ENCODE measurements at regions of chrX and their contacts with region 1.

Region 1: DNA sequence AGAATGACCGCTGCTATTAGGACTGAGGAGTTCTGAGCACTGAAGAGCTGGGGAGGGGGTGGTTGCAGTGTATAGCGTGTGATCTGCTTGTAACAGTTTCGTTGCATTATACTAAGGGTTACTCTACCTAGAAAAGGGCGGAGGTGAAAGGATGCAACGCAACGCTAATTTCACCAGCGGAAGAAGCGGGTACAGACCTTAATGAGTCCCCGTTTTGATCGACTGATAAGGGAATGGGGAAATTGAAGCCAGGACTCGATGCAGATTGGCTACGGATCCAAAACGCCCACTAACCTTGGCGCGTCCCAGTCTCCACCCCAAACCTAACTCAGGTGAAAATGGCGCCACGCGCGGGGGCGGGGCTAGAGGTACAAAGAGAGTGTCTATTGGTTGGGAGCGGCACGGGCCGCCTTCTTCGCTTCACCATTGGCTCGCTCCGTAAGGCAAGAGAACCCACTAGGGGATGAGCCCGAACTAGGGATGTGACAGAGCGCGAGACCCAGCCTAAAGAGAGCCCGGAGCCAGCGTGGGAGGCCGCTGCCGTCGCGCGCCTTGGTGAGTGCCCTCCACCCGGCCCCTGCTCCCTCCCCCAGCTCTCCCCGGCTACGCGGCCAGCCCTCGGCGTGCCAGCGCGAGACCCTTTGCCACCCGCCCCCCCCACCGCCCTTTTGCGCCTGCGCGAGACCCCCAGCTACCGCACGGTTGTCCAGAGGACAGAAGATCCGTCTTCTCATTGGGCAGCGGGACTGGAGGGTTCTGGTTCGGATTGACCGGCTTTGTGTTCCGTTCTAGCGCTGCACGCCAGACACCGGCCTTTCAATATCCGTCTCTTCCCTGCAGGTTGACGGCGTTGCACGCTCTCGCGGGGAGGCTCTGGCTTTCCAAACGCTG is at the start of gene EBP:
- H3K4me3 ChIP-seq: peak within 1 kb of the TSS; percentile 59
- H3K27ac ChIP-seq: peak within 1 kb of the TSS; percentile 58; the same call in 1 of the 2 replicates
- H3K4me1 ChIP-seq: no peaks in the 10 kb centered on the region
- CTCF ChIP-seq: no peak

Region 2: GRCh38 chrX:48045410-48046331 is 475.9 kb before region 1 on chrX:
- CTCF ChIA-PET with region 1: no interaction called
- POLR2A ChIA-PET with region 1: no interaction called
- H3K4me3 ChIP-seq: no peak overlapping the region
- H3K27ac ChIP-seq: no peak overlapping the region
- H3K4me1 ChIP-seq: no peaks in the 10 kb centered on the region; the same call in 1 of the 2 replicates
- CTCF ChIP-seq: no peak

Region 3: GRCh38 chrX:48539345-48540027 is 17.9 kb after region 1 on chrX and contains the start of gene TBC1D25:
- CTCF ChIA-PET with region 1: no interaction called
- POLR2A ChIA-PET with region 1: interaction called, 16 read pairs
- H3K4me3 ChIP-seq: peak within 1 kb of the TSS; percentile 68
- H3K27ac ChIP-seq: peak within 1 kb of the TSS; percentile 74
- H3K4me1 ChIP-seq: no peaks in the 10 kb centered on the region
- CTCF ChIP-seq: peak; percentile 81

Region 4: GRCh38 chrX:48631350-48632090 is 109.9 kb after region 1 on chrX:
- CTCF ChIA-PET with region 1: no interaction called
- POLR2A ChIA-PET with region 1: interaction called, 10 read pairs
- H3K4me3 ChIP-seq: no peak overlapping the region
- H3K27ac ChIP-seq: no peak overlapping the region
- H3K4me1 ChIP-seq: no peaks in the 10 kb centered on the region
- CTCF ChIP-seq: peak; percentile 88; the same call in 1 of the 2 replicates